ENCODE measurements at regions of chr1 and their contacts with region 1.

Region 1: GRCh38 chr1:53681977-53682685 is 56.8 kb downstream of the GLIS1 start:
- DNase-seq: peak; percentile 54 to 76
- H3K4me3 ChIP-seq: no peak overlapping the region
- H3K27ac ChIP-seq: no peak overlapping the region
- H3K4me1 ChIP-seq: peaks cover 4 to 15% (median 12%) of the 10 kb centered on the region in 4 experiments
- H3K27me3 ChIP-seq: peaks cover 0 to 11% (median 4%) of the 10 kb centered on the region in 4 experiments; a peak in 3 of 7 replicates
- CTCF ChIP-seq: peak; percentile 94 to 97 (median 95)
- EP300 ChIP-seq: no peak
- POLR2A ChIP-seq: no peak
- RAD21 ChIP-seq: peak; percentile 89 to 95

Region 2: DNA sequence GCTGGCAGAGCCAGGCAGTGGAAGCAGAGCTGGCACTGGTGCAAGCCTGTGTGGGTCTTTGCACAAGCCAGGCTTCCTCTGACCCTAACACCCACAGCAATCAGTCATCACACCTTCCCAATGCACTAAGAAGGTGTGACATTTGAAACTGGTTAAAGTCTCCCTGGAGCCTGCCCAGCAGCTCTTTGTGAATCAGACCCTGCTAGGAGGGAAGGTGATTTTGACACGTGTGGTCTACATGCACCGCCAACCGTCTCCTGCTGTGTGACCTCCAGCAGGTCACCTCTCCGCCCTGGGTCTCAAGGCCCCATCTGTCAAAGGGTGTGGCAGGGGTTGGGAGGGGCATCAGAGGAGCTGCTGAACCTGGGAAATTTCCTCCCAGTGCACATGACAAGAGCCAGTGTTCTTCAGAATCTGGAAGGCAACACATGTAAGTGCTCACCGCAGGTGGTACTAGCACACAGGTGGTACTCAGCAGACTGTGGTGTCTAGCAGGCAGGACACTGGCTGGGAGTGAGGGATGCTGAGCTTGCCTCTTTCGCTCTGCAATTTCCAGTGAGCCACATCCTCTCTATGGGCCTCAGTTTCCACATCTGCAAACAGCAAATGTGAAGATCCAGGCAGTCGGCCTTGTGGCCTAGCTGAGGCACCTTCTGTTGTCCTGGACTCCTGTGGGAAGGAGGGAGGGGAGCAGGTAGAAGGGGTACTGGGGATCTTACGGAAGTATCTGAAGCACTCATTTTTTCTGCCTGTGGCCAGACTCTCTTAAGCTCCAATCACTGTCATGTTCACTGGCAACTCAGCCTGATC is 99.7 kb before region 1 on chr1:
- CTCF ChIA-PET with region 1: interaction called, 13 read pairs
- POLR2A ChIA-PET with region 1: no interaction called
- DNase-seq: no peak
- H3K4me3 ChIP-seq: no peak overlapping the region
- H3K27ac ChIP-seq: no peak overlapping the region
- H3K4me1 ChIP-seq: no peaks in the 10 kb centered on the region
- H3K27me3 ChIP-seq: no peaks in the 10 kb centered on the region; a peak in 1 of 7 replicates
- CTCF ChIP-seq: no peak
- EP300 ChIP-seq: no peak
- POLR2A ChIP-seq: no peak
- RAD21 ChIP-seq: no peak

Region 3: DNA sequence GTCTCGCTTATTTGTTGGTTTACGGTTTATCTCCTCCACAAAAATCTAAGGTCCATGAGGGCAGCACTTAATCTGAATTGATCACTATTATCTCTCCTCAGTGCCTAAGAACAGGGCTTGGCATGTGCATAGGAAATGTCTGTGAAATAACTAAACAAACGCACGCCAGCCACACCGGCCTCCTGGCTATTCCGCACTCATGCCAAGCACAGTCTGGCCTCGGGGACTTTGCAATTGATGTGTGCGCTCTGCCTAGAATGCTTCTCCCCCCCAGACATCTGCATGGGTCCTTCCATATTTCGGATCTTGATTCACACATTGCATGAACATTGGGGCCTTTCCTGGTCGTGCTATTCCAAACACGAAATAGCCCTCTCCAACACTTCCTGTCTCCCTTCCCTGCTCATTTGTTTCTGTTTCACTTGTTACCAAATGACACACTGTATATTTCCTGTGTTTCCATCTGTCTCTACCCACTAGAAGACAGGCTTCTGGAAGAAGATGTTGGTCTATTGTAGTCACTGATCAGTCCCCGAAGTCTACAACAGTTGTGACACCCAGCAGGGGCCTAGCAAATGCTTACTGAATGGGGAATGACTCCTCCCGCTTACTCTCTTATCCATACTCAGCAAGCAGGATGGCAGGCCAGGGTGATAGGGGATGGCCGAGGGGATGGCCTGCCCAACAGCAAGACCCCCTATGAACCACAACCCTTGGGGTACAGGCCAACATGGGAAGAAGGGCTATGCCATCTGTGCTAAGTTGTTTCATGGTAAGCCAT is 37.0 kb before region 1 on chr1:
- CTCF ChIA-PET with region 1: interaction called, 13 read pairs
- POLR2A ChIA-PET with region 1: no interaction called
- DNase-seq: no peak
- H3K4me3 ChIP-seq: no peak overlapping the region
- H3K27ac ChIP-seq: no peak overlapping the region
- H3K4me1 ChIP-seq: peaks cover 0 to 2% (median under 1%) of the 10 kb centered on the region in 4 experiments; a peak in 2 of 7 replicates
- H3K27me3 ChIP-seq: no peaks in the 10 kb centered on the region; a peak in 1 of 7 replicates
- CTCF ChIP-seq: no peak
- EP300 ChIP-seq: no peak
- POLR2A ChIP-seq: no peak
- RAD21 ChIP-seq: no peak

Region 4: GRCh38 chr1:53669637-53670191 is 12.4 kb before region 1 on chr1:
- CTCF ChIA-PET with region 1: interaction called, 22 read pairs
- POLR2A ChIA-PET with region 1: no interaction called
- DNase-seq: no peak
- H3K4me3 ChIP-seq: no peak overlapping the region
- H3K27ac ChIP-seq: no peak overlapping the region
- H3K4me1 ChIP-seq: peaks cover 0 to 5% (median 2%) of the 10 kb centered on the region in 4 experiments; a peak in 3 of 7 replicates
- H3K27me3 ChIP-seq: peaks cover 0 to 2% (median 0%) of the 10 kb centered on the region in 4 experiments; a peak in 3 of 7 replicates
- CTCF ChIP-seq: no peak
- EP300 ChIP-seq: no peak
- POLR2A ChIP-seq: no peak
- RAD21 ChIP-seq: no peak

Region 5: GRCh38 chr1:53715478-53715877 is 33.3 kb after region 1 on chr1:
- CTCF ChIA-PET with region 1: interaction called, 22 read pairs
- POLR2A ChIA-PET with region 1: no interaction called
- DNase-seq: peak; percentile 29 to 84
- H3K4me3 ChIP-seq: no peak overlapping the region
- H3K27ac ChIP-seq: no peak overlapping the region
- H3K4me1 ChIP-seq: no peaks in the 10 kb centered on the region; a peak in 3 of 7 replicates
- H3K27me3 ChIP-seq: no peaks in the 10 kb centered on the region
- CTCF ChIP-seq: peak; percentile 66 to 90 (median 78)
- EP300 ChIP-seq: no peak
- POLR2A ChIP-seq: no peak
- RAD21 ChIP-seq: peak; percentile 45 to 64

Region 6: DNA sequence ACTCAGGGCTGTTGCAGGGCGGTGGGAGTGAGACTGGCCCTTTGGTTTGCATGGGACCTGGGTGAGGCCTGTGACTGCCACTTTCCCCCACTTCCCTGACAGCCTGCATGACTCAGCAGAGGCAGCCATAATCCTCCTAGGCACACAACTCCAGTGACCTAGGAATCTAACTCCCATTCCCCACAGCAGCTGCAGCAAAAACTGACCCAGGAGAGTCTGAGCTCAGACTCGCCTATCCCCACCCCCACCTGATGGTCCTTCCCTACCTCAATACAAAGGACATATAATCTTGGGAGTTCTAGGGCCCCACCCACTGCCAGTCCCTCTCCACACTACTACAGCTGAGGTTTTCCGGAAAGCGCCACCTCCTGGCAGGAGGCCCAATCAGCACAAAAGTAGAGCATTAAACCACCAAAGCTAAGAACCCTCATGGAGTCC is 129.3 kb after region 1 on chr1:
- CTCF ChIA-PET with region 1: no interaction called
- POLR2A ChIA-PET with region 1: no interaction called
- DNase-seq: peak; percentile 17 to 84
- H3K4me3 ChIP-seq: no peak overlapping the region
- H3K27ac ChIP-seq: no peak overlapping the region
- H3K4me1 ChIP-seq: no peaks in the 10 kb centered on the region; a peak in 1 of 7 replicates
- H3K27me3 ChIP-seq: no peaks in the 10 kb centered on the region
- CTCF ChIP-seq: peak; percentile 50 to 69 (median 52)
- EP300 ChIP-seq: no peak
- POLR2A ChIP-seq: 0 out of 3 replicates have a peak, but pooled peaks of 1 of the 2 experiments have one; percentile 26
- RAD21 ChIP-seq: peak in 1 of 2 experiments; percentile 27; a peak in 2 of 4 replicates

Measured in H1 (cell line).